ENCODE measurements at regions of chr5 and their contacts with region 1.

Region 1: DNA sequence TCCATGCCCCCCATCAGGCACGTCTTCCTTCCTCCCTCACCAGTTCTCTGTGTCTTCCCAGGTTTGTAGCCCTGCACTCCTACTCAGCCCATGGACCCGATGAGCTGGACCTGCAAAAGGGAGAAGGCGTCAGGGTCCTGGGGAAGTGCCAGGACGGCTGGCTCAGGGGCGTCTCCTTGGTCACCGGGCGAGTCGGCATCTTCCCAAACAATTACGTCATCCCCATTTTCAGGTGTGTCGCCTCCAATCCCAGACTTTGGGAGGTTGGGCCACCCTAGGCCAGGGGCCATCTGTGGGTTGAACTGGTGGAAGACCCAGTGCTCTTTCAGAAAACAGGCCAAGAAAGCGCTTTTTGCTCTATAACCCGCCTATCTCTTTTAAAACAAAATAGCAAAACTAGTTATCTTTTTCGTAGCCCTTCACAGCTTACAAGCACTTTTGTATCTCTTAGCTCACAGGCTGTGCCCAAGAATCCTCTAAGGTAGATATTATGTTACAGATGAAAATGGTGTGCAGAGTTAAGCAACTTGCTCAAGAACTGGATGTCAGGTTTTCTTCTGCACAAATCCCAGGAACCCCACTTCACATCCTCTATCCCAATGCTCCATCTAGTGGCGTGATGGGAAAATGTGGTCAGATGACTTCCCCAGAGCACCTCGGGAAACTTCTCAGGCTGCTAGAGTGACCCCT is 56.2 kb downstream of the PLAC8L1 start:
- DNase-seq: peak in 1 of 2 experiments; percentile 76
- H3K4me3 ChIP-seq: no peak overlapping the region
- H3K27ac ChIP-seq: no peak overlapping the region
- H3K4me1 ChIP-seq: no peaks in the 10 kb centered on the region; a peak in 1 of 7 replicates
- H3K27me3 ChIP-seq: no peaks in the 10 kb centered on the region
- CTCF ChIP-seq: peak; percentile 66 to 88 (median 87)
- EP300 ChIP-seq: no peak
- POLR2A ChIP-seq: no peak
- RAD21 ChIP-seq: peak; percentile 96 to 98

Region 2: GRCh38 chr5:145681686-145682085 is 367.5 kb before region 1 on chr5:
- CTCF ChIA-PET with region 1: interaction called, 11 read pairs
- POLR2A ChIA-PET with region 1: no interaction called
- DNase-seq: peak in 1 of 2 experiments; percentile 54
- H3K4me3 ChIP-seq: no peak overlapping the region
- H3K27ac ChIP-seq: no peak overlapping the region
- H3K4me1 ChIP-seq: no peaks in the 10 kb centered on the region
- H3K27me3 ChIP-seq: no peaks in the 10 kb centered on the region
- CTCF ChIP-seq: peak; percentile 33 to 87 (median 72)
- EP300 ChIP-seq: no peak
- POLR2A ChIP-seq: no peak
- RAD21 ChIP-seq: peak; percentile 61 to 71

Region 3: GRCh38 chr5:145811834-145812625 is 237.1 kb before region 1 on chr5:
- CTCF ChIA-PET with region 1: interaction called, 12 read pairs
- POLR2A ChIA-PET with region 1: no interaction called
- DNase-seq: no peak
- H3K4me3 ChIP-seq: no peak overlapping the region
- H3K27ac ChIP-seq: no peak overlapping the region
- H3K4me1 ChIP-seq: no peaks in the 10 kb centered on the region
- H3K27me3 ChIP-seq: no peaks in the 10 kb centered on the region
- CTCF ChIP-seq: peak in 2 of 3 experiments; percentile 47 to 48; a peak in 3 of 4 replicates
- EP300 ChIP-seq: no peak
- POLR2A ChIP-seq: no peak
- RAD21 ChIP-seq: peak; percentile 73 to 79

Region 4: DNA sequence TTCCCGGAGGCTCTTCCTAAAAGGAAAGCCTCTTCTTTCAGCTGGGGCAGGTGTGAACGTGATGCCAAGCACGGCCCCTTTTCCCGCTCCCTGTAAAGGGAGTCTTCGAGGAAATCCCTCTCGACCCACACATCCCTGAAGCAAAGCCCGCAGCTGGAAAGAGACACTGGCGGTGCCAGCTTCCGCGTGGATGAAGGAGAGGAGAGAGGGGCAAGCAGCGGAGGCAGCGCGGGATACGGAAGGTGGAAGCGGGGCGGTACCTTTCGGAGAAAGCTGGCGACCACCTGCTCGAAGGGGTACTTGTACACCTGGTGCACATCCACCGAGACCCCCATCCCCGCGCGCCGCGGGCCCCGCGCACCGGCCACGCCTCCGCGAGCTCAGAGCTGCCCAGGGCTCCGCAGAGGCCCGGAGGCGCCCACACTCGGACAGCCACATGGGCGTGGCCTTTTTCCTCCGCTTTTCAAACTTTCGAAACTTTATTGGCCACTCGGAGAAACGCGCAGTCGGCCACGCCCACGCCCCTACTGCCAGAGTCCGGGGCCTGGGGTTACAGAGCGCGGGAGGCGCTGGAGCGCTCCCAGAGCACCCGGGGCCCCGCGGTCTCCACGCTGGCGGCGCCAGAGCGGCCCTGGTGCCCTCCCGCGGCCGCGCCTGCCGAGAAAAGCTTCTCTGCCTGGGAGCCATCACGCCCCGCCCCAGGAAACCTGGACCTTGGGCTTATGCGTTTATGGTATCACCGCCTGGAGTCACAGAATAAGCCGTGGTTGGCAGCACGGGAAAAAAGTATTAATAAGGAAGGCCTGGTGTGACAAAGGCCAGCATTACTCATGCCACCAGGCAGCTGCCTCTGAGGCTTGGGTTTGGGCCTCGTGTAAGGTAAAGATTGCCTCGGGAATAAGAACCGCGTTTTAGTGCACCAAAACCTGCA is 214.0 kb before region 1 on chr5 and contains the start of gene PRELID2:
- CTCF ChIA-PET with region 1: interaction called, 13 read pairs
- POLR2A ChIA-PET with region 1: no interaction called
- DNase-seq: peak; percentile 47 to 91
- H3K4me3 ChIP-seq: peak within 1 kb of the TSS; percentile 56 to 66 (median 62)
- H3K27ac ChIP-seq: no peak within 1 kb of the TSS
- H3K4me1 ChIP-seq: peaks cover 2 to 6% (median 4%) of the 10 kb centered on the region in 4 experiments; a peak in 4 of 7 replicates
- H3K27me3 ChIP-seq: peaks cover 0 to 18% (median 16%) of the 10 kb centered on the region in 4 experiments; a peak in 6 of 7 replicates
- CTCF ChIP-seq: no peak
- EP300 ChIP-seq: peak in 1 of 2 experiments; percentile 63; a peak in 1 of 3 replicates
- POLR2A ChIP-seq: peak in 1 of 2 experiments; percentile 43; a peak in 1 of 3 replicates
- RAD21 ChIP-seq: no peak
- total RNA-seq, gene PRELID2: 7.5 and 7.8 TPM in 2 replicates

Region 5: DNA sequence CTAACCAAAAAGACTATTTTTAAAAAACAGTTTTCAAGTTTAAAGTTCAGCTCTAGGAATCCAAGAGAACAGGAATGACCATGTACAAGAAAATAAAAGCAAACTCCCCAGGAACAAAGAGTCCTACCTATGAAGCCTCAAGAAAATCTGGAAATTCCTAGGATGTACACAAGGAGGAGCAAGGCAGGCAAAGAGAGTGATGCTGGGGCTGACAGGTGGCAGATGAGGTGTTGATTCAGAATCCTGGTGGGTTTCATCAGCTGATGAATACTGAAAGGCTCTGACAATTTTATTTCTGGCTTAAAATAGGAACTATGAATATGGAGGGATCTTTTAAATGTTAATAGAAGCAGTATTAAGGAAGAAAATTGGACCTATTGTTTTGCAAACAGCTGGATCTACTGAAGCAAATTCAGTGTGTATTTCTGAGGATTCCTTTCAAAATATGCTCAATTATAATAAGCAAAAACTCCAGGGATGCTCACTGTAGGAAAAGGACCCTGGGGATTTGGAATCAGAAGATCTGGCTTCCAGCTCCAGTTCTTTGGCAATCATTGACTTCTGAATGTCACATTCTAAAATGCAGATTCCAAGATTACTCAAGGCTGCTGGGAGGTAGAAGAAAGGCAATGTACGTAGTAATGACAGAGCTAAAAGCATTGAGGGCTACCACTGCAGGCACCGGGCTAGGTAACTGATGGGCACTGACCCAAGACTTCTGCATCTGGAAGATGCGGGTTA is 140.8 kb before region 1 on chr5:
- CTCF ChIA-PET with region 1: interaction called, 28 read pairs
- POLR2A ChIA-PET with region 1: no interaction called
- DNase-seq: no peak
- H3K4me3 ChIP-seq: no peak overlapping the region
- H3K27ac ChIP-seq: no peak overlapping the region
- H3K4me1 ChIP-seq: no peaks in the 10 kb centered on the region
- H3K27me3 ChIP-seq: no peaks in the 10 kb centered on the region
- CTCF ChIP-seq: peak in 2 of 3 experiments; percentile 38 to 51; a peak in 3 of 4 replicates
- EP300 ChIP-seq: no peak
- POLR2A ChIP-seq: no peak
- RAD21 ChIP-seq: peak; percentile 51 to 66

Region 6: DNA sequence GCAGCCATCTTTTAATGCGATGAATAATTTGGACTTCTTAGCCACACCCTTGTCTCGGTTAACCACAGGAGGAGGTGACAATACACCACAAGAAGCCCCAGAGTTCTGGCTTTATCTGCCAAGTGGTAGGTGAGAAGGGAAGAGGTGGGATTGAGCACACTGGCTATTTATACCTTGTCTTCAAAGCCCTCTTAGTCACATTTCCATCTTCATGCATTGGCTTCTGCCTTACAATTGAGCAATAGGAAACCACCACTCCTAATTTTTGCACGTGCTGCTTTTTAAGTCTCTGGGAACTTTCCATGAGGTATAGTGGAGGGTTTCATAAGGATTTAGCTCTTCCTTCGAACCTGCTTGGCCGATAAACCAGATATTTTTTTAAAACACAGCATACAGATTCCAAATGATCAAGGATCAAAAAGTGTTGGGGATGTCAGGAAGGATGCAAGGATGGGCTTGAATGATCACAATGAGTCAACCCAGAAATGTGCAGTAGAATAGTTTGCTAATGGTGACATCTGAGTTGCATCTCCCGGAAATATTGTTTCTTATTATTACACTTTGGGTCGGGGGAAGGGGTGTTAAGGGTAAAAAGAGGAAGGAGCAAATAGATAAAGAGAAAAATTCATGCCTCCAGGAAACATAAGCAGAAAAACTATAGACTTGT is 30.7 kb after region 1 on chr5:
- CTCF ChIA-PET with region 1: no interaction called
- POLR2A ChIA-PET with region 1: no interaction called
- DNase-seq: no peak
- H3K4me3 ChIP-seq: no peak overlapping the region
- H3K27ac ChIP-seq: no peak overlapping the region
- H3K4me1 ChIP-seq: peaks cover 0 to 21% (median 14%) of the 10 kb centered on the region in 4 experiments; a peak in 6 of 7 replicates
- H3K27me3 ChIP-seq: no peaks in the 10 kb centered on the region; a peak in 1 of 7 replicates
- CTCF ChIP-seq: no peak
- EP300 ChIP-seq: no peak
- POLR2A ChIP-seq: no peak
- RAD21 ChIP-seq: no peak

Measured in H1 (cell line).